Activated CD4-positive, alpha-beta T cell treated with anti-CD3 and anti-CD28 coated beads for 36 hours (primary cell): ENCODE measurements at regions of chr16 and their contacts with region 1.

Region 1: GRCh38 chr16:11312718-11313492 is 31.8 kb upstream of the PRM1 start:
- DNase-seq: peak; percentile 47
- ATAC-seq: peak; percentile 24
- H3K4me3 Mint-ChIP-seq: no peak overlapping the region
- H3K27ac Mint-ChIP-seq: peak overlapping the region; percentile 43
- H3K4me1 Mint-ChIP-seq: peaks cover 38% of the 10 kb centered on the region
- H3K27me3 Mint-ChIP-seq: no peaks in the 10 kb centered on the region

Region 2: DNA sequence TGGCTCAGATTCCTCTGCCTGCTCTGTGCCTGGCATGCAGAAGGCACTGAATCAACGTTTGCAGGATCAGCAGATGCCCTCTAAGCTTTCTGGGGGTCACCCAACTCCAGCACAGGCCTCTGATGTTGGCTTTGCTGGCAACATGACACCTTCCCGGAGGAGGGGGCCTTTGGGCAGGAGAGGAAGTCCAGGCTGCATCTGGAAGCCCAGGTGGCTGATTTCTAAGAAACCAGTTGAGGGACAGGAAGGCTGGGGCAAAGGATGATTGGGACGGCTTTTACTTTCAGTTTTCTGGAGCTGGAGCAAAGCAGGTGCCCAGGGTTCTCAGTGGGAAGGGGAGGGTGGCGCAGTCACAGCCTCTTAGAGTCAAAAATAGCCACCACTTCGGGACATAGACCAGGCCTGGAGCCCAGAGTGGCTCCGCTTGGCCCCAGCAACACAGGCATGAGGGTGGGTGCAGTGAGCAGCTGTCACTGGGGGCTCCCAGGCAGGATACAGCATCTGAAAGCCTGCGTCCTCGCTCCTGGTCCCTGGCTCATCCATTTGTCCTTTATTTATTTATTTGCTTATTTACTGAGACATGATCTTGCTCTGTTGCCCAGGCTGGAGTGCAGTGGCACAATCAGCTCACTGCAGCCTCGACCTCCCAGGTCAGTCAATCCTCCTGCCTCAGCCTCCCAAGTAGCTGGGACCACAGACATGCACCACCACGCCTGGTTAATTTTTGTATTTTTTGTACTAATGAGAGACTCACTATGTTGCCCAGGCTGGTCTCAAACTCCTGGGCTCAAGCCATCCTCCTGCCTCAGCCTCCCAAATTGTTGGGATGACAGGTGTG is 72.0 kb before region 1 on chr16:
- CTCF ChIA-PET with region 1: no interaction called
- POLR2A ChIA-PET with region 1: no interaction called
- intact Hi-C with region 1: no loop called
- DNase-seq: no peak
- ATAC-seq: peak; percentile 43
- H3K4me3 Mint-ChIP-seq: no peak overlapping the region
- H3K27ac Mint-ChIP-seq: peak overlapping the region; percentile 60
- H3K4me1 Mint-ChIP-seq: peaks cover 23% of the 10 kb centered on the region
- H3K27me3 Mint-ChIP-seq: no peaks in the 10 kb centered on the region

Region 3: GRCh38 chr16:11263737-11264136 is 49.2 kb before region 1 on chr16:
- CTCF ChIA-PET with region 1: no interaction called
- POLR2A ChIA-PET with region 1: no interaction called
- intact Hi-C with region 1: loop called (anchors 1 to 5 kb)
- DNase-seq: peak; percentile 81
- ATAC-seq: peak; percentile 90
- H3K4me3 Mint-ChIP-seq: peak overlapping the region; percentile 19
- H3K27ac Mint-ChIP-seq: peak overlapping the region; percentile 90
- H3K4me1 Mint-ChIP-seq: peaks cover 37% of the 10 kb centered on the region
- H3K27me3 Mint-ChIP-seq: no peaks in the 10 kb centered on the region

Region 4: GRCh38 chr16:11328172-11329070 is 15.5 kb after region 1 on chr16:
- CTCF ChIA-PET with region 1: interaction called, 4 read pairs
- POLR2A ChIA-PET with region 1: interaction called, 3 read pairs
- intact Hi-C with region 1: loop called (anchors 1 to 2 kb)
- DNase-seq: peak; percentile 73
- ATAC-seq: peak; percentile 81
- H3K4me3 Mint-ChIP-seq: peak overlapping the region; percentile 37
- H3K27ac Mint-ChIP-seq: peak overlapping the region; percentile 64
- H3K4me1 Mint-ChIP-seq: peaks cover 51% of the 10 kb centered on the region
- H3K27me3 Mint-ChIP-seq: no peaks in the 10 kb centered on the region